ENCODE measurements at regions of chr1 and their contacts with region 1.

Region 1: GRCh38 chr1:169119405-169119804 is 12.9 kb downstream of the ATP1B1 start:
- DNase-seq: no peak
- H3K4me3 ChIP-seq: no peak overlapping the region
- H3K27ac ChIP-seq: peak overlapping the region; percentile 25
- H3K27me3 ChIP-seq: no peaks in the 10 kb centered on the region
- CTCF ChIP-seq: no peak

Region 2: DNA sequence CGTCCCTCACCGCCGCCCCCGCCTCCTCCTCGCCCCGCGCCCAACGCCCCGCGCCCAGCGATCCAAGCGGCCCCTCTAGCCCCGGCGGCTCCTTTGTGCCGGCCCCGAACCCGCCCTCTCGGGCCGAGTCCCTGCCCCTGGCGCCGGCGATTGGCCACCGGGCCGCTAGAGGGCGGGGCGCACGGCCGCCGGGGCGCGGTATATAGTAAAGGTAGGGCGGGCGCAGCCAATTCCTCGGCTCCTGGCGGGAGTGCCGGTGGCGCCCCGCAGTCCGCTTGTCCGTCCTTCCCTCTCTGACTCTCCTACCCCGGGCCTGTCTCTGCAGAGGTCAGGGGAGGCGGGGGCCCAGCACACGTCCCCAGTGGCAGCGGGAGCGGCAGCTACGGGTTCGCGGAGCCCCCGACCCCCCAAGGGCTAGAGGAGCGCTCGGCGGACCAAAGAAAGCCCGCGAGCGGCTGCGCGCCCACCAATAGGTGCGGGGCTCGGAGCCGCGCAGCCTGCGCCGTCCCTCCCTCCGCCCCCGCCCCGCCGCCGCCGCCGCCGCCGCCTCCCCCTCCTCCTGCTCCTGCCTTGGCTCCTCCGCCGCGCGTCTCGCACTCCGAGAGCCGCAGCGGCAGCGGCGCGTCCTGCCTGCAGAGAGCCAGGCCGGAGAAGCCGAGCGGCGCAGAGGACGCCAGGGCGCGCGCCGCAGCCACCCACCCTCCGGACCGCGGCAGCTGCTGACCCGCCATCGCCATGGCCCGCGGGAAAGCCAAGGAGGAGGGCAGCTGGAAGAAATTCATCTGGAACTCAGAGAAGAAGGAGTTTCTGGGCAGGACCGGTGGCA is 13.1 kb before region 1 on chr1 and contains the start of gene ATP1B1:
- CTCF ChIA-PET with region 1: interaction called, 7 read pairs
- POLR2A ChIA-PET with region 1: interaction called, 15 read pairs
- DNase-seq: peak; percentile 26
- H3K4me3 ChIP-seq: peak within 1 kb of the TSS; percentile 82
- H3K27ac ChIP-seq: peak within 1 kb of the TSS; percentile 52
- H3K27me3 ChIP-seq: peaks cover 6% of the 10 kb centered on the region
- CTCF ChIP-seq: peak; percentile 32; the same call in 1 of the 2 replicates
- polyA plus RNA-seq, gene ATP1B1: 17.6 and 25.0 TPM in 2 replicates

Measured in AG04450 (cell line).